ENCODE measurements at regions of chr19 and their contacts with region 1.

Region 1: DNA sequence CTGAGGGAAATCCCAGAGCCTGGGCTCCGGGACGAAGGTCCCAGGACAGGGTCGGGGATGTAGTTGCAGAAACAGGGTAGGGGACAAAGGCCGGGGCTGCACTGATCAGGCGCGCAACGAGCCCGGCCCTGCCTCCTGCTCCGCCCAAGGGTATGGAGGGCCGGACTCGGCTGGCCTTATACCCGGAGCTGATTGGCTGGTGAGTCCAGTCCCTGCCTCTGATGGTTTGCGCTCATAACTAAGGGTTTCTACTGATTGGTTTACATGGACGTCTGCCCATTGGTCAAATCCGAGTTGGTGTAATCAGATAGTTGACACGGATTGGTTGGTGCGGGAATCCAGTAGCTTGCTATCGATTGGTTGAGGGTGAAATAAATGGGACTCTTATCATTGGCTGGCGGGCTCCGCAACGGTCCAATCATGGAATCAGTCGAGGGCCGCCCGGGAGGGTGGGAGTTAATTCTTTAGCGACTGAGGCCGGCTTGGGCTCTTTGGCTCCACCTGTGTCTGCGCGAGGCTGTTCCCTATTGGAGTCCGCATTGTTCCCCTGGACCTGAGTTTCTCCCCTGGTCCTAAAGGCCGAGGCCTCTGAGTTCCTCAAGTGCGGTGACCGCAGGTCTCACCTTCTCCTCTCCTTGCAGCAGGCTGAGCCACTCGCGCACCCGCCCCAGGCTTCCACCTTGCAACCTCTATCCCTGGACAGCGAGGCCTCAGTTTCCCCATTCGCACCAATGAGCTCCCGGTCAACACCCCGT is 570 bp upstream of the MPND start:
- DNase-seq: peak; percentile 92
- H3K4me3 Mint-ChIP-seq: peak overlapping the region; percentile 91
- H3K27ac Mint-ChIP-seq: peak overlapping the region; percentile 90
- H3K4me1 Mint-ChIP-seq: peaks cover 18% of the 10 kb centered on the region
- H3K27me3 Mint-ChIP-seq: no peaks in the 10 kb centered on the region

Region 2: DNA sequence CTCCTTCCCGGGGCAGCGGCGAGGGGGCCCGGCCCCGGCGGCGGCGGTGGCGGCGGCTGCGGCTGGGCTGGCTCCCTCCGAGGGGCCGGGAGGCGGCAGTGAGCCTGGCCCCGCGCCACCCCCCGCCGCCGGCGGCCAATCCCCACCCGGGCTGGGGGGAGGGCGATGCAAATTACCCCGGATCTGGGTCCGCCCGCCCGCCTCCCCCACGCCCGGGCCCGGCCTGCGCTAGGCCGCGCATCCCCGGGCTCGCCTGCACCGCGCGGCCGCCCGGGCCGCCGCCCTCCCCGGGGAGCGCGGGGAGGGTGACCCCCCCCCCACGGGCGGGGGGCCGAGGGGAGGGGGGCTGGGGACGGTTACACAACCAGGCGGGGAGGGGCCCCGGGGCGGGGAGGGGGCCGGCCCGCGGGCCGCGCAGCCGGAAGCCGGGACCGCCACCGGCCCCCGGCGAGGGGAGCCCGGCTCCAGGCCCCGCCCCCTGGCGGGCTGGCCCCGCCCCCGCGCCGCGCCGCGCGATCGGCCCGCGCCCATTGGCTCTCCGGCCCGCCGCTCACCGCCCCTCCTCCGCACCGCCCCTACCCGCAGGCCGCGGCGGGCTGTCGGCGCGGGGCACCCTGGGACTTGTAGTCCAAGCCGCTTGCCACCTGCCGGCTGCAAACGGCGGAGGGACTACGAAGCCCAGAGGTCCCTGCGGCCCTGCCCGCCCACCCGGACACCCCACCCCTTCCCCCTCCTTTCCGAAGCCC is 277.2 kb before region 1 on chr19:
- intact Hi-C with region 1: loop called (anchors 1 kb)
- DNase-seq: peak; percentile 97
- H3K4me3 Mint-ChIP-seq: peak overlapping the region; percentile 64
- H3K27ac Mint-ChIP-seq: no peak overlapping the region
- H3K4me1 Mint-ChIP-seq: peaks cover 16% of the 10 kb centered on the region
- H3K27me3 Mint-ChIP-seq: no peaks in the 10 kb centered on the region

Region 3: GRCh38 chr19:4267101-4267900 is 75.5 kb before region 1 on chr19:
- intact Hi-C with region 1: loop called (anchors 1 kb)
- DNase-seq: peak; percentile 40
- H3K4me3 Mint-ChIP-seq: no peak overlapping the region
- H3K27ac Mint-ChIP-seq: peak overlapping the region; percentile 9
- H3K4me1 Mint-ChIP-seq: peaks cover 17% of the 10 kb centered on the region
- H3K27me3 Mint-ChIP-seq: no peaks in the 10 kb centered on the region

Region 4: GRCh38 chr19:4304530-4305252 is 38.1 kb before region 1 on chr19 and contains the start of gene FSD1:
- intact Hi-C with region 1: loop called (anchors 1 kb)
- DNase-seq: peak; percentile 76
- H3K4me3 Mint-ChIP-seq: peak within 1 kb of the TSS; percentile 81
- H3K27ac Mint-ChIP-seq: peak within 1 kb of the TSS; percentile 70
- H3K4me1 Mint-ChIP-seq: peaks cover 31% of the 10 kb centered on the region
- H3K27me3 Mint-ChIP-seq: no peaks in the 10 kb centered on the region
- total RNA-seq, gene FSD1: 39.1 and 46.5 TPM in 2 replicates

Region 5: DNA sequence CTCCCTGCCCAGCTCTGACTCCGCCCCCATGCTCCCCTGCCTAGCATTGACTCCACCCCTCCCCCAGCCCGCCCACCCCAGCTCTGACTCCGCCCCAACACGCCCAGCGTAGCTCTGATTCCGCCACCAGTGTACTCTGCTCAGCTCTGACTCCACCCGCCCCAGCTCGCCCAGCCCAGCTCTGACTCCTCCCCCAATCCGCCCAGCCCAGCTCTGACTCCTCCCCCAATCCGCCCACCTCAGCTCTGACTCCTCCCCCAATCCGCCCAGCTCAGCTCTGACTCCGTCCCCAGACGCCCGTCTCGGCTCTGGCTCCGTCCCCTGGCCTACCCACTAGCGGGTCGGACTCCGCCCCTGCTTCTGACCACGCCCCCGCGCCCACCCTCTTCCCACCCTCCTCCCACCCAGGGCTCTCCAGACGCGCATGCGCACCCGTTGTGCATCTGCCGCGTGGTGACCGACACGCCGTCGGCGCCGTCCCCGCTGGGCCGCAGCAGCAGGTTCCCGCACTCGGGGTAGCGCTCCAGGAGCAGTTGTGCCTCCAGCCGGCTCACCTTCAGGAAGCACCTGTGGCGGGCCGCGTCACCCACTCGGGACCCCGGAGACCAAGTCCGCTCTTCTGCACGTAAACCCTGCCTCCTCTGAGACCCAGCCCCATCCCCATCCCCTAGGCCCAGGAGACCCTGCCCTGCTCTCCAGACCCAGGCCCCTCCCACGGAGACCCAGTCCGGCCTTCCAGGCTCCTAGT is 14.4 kb before region 1 on chr19:
- intact Hi-C with region 1: loop called (anchors 1 kb)
- DNase-seq: peak; percentile 87
- H3K4me3 Mint-ChIP-seq: peak overlapping the region; percentile 84
- H3K27ac Mint-ChIP-seq: peak overlapping the region; percentile 90
- H3K4me1 Mint-ChIP-seq: peaks cover 15% of the 10 kb centered on the region
- H3K27me3 Mint-ChIP-seq: peaks cover 9% of the 10 kb centered on the region

Region 6: GRCh38 chr19:4369888-4370260 is 27.1 kb after region 1 on chr19:
- intact Hi-C with region 1: loop called (anchors 1 kb)
- DNase-seq: peak; percentile 67
- H3K4me3 Mint-ChIP-seq: peak overlapping the region; percentile 69
- H3K27ac Mint-ChIP-seq: peak overlapping the region; percentile 92
- H3K4me1 Mint-ChIP-seq: peaks cover 42% of the 10 kb centered on the region
- H3K27me3 Mint-ChIP-seq: no peaks in the 10 kb centered on the region

Region 7: GRCh38 chr19:4457654-4458395 is 115.0 kb after region 1 on chr19 and contains the start of gene UBXN6:
- intact Hi-C with region 1: loop called (anchors 2 kb)
- DNase-seq: peak; percentile 98
- H3K4me3 Mint-ChIP-seq: peak within 1 kb of the TSS; percentile 92
- H3K27ac Mint-ChIP-seq: peak within 1 kb of the TSS; percentile 94
- H3K4me1 Mint-ChIP-seq: peaks cover 11% of the 10 kb centered on the region
- H3K27me3 Mint-ChIP-seq: peaks cover 2% of the 10 kb centered on the region
- total RNA-seq, gene UBXN6: 49.5 and 51.0 TPM in 2 replicates

Region 8: DNA sequence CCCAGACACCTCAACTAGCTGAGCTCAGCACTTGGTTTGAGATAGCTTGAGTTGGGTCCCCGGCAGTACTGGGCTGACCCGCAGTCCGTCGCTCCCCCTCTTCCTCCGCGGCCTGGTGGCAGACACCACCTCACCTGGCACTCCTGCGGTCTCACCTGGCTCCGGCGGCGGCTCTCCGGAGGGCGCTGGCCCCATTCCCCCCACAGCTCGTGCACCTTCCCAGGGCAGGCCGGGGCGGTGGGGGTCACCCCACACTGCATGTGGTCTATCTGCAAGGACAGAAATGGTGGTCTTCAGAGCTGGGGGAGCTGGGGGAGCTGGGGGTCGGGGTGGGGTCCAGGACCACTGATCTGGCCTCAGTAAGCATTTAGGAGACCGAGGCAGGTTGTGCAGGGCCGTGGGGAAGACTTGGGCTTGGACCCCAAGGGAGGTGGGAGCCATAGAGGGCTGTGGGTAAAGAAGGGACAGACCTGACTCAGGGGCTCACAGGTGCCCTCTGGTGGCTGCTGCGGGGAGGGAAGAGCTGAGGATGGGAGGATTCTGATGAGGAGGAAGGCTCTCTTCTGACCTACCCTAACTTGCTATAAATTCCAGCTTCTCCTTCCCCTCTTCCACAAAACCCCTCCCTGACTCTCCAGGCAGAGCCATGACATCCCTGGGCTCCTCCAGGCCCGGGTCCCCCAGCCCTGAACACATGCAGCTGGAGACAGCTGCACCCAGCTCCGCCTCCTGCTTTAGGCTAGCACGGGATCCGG is 182.2 kb after region 1 on chr19:
- intact Hi-C with region 1: no loop called
- DNase-seq: peak; percentile 42
- H3K4me3 Mint-ChIP-seq: no peak overlapping the region
- H3K27ac Mint-ChIP-seq: no peak overlapping the region
- H3K4me1 Mint-ChIP-seq: no peaks in the 10 kb centered on the region
- H3K27me3 Mint-ChIP-seq: peaks cover 6% of the 10 kb centered on the region

Region 9: DNA sequence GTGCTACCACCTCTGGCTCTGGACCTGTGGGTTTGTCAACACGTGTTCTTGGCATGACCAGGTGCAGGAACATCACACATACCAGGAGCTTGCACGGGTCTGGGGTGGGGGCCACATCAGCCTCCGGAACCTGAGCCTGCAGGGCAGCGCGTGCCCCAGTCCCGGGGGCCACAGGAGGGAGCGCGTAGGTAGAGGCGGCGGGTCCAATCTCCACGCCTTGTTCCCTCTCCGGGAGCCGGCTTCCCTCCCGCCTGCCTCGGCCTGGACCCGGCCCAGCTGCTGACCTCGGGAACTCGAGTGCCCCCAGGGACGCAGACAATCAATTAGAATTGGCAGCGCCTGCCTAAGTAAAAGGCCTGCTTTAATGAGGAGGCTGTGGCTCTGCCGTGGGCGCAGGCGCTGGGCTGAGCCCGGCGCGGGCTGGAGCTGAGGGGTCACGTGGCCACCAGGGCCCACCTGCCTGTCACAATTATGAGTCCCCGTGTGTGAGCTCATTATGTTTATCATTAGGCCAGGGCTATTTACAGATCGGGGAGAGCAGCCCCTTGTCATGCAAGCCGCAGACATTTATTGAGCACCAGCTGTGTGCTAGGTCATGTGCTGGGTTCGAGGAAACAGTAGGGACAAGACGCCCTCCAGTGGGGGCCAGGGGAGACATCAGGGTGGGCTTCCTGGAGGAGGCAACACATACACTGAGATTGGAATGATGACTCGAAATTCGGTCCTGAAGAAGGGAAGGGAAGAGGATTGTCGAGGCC is 264.3 kb after region 1 on chr19:
- intact Hi-C with region 1: no loop called
- DNase-seq: no peak
- H3K4me3 Mint-ChIP-seq: no peak overlapping the region
- H3K27ac Mint-ChIP-seq: no peak overlapping the region
- H3K4me1 Mint-ChIP-seq: no peaks in the 10 kb centered on the region
- H3K27me3 Mint-ChIP-seq: peaks cover 16% of the 10 kb centered on the region

Measured in activated T-helper 1 cell treated with anti-CD3 and anti-CD28 coated beads, Interleukin-12 subunit alpha, Interleukin-12 subunit beta, Interleukin-2, Interleukin-4 antibody, amounts not matched to agents 30 ng/mL and 10 ng/mL and 1 ng/mL, durations not matched to agents 14 hours and 24 hours and 36 hours (primary cell).